Posterior cingulate gyrus (tissue), 11 donors: ENCODE measurements at regions of chr1 and their contacts with region 1.

Region 1: DNA sequence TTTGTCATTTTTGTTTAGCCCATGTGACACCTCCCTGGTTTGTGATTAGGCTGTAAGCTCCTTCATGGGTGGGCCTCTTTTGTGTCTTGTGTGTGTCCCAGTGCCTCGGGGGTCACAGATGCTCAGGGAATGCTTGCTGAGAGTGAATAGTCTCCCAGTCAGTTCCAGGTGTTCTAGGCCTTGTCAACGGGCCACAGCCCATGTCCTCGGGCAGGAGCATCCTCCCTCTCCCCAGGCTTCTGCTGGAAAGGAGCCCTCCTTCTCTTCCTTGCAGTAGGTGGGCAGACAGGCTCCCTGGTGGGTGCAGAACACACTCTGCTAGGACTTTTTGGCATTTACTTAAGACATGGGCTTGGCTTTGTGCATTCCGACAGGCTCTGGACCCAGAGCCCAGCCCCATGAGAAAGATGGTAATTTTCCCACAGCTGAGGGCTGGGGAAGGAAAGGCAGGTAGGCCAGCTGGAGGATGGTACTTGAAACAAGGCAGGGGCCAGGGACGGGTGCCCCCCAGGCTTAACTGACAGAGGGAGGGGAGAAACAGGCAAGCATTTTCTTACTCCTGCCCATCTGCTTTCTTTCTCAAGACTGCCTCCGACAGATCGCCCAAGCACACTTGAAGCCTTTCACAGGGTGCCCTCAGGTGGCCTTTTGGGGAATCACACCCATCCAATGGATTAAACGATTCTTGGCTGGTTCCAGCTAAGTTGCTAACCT is 7.1 kb upstream of the CPLANE2 start:
- DNase-seq: peak; percentile 40 to 93 (median 74)

Region 2: GRCh38 chr1:16164213-16165072 is 79.7 kb before region 1 on chr1:
- intact Hi-C with region 1: no loop called
- DNase-seq: no peak

Region 3: GRCh38 chr1:16187748-16188401 is 56.2 kb before region 1 on chr1:
- intact Hi-C with region 1: loop called (anchors 5 kb)
- DNase-seq: peak in 9 of 10 donors; percentile 36 to 96 (median 68)

Region 4: GRCh38 chr1:16366722-16367257 is 122.7 kb after region 1 on chr1 and contains the start of gene SZRD1:
- intact Hi-C with region 1: loop called (anchors 10 kb)
- DNase-seq: peak; percentile 89 to 99 (median 94)